Posterior vena cava (tissue), 2 donors: ENCODE measurements at regions of chr22 and their contacts with region 1.

Region 1: DNA sequence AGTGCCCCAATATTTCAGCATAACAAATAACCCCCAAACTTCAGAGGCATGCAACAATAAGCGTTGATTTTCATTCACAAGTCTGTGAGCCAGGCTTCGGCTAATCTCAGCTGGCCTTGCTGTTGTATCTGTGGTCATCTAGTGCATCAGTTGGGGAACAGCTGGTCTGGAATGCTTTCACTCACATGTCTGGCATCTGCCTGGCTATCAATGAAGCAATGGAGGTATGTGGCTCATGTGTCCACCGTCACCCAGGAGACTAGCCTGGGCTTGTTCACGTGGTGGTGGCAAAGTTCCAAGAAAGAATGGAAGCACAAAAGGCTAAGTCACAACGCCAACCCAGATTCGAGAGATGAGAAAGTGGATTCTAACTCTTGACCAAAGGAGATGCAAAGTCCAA is 304.8 kb upstream of the ISX start:
- DNase-seq: no peak

Region 2: DNA sequence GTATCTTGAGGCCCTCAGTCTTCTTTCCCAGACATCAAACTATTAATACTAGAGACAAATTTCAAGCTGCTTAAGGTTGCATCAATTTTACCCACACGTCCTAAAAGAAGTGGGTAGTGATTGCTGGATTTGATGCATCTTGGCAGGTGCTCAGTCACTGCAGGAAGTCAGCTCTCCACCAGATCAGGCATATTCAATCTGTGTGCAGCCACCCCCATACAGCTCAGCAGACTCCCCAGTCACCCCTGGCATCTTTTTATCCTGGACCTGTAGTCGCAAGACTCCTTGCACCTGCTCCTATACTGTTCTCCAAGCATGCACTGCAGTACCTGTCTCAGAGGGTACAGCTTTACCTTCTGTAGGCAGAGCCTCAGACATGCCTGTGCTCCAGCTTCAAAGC is 38.2 kb before region 1 on chr22:
- intact Hi-C with region 1: loop called in 1 of 2 experiments (anchors 1 kb)
- DNase-seq: no peak